Ovary (tissue), 10 donors: ENCODE measurements at regions of chr2 and their contacts with region 1.

Region 1: DNA sequence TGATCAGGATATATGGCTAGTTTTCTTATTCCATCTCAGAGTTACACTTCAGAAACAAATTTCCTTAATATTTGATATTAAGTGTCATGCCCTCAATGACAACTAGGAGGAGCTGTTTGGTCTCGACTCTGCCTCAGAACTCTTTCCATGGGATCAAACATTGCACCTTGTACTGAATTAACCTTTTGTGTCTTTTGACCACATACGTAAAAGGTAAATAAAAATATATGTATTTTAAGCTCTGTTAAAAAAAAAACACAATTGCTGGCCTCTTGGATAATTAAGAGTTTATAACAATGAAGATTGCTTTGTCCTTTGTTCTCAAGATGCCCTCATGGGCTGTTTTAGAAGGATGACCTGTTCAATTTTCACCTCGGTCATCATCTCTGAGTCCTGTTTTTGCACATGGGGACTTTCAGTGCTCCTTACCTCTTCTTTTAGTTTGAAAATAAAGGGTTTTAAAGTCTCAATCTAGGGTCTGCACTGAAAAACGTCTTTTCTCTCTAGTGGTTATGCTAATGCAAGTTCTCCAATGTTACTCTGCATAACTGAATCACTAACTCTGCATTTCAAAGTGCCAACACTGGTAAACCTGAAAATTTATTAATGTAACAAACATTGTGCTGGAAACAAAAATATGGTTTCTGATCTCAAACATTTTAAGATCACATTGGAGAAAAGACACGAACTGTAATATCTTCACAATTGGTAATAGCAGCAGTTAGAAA is 18.8 kb upstream of the FN1 start:
- DNase-seq: no peak
- H3K4me3 ChIP-seq: no peak overlapping the region
- H3K27ac ChIP-seq: no peak overlapping the region
- H3K4me1 ChIP-seq: peaks cover 2% of the 10 kb centered on the region
- H3K27me3 ChIP-seq: no peaks in the 10 kb centered on the region
- CTCF ChIP-seq: peak; percentile 70 to 81 (median 71)
- EP300 ChIP-seq: no peak
- POLR2A ChIP-seq: no peak

Region 2: GRCh38 chr2:214753455-214753854 is 701.2 kb before region 1 on chr2:
- intact Hi-C with region 1: no loop called
- DNase-seq: no peak
- H3K4me3 ChIP-seq: no peak overlapping the region
- H3K27ac ChIP-seq: no peak overlapping the region
- H3K4me1 ChIP-seq: no peaks in the 10 kb centered on the region
- H3K27me3 ChIP-seq: no peaks in the 10 kb centered on the region
- CTCF ChIP-seq: no peak
- EP300 ChIP-seq: no peak
- POLR2A ChIP-seq: no peak

Region 3: DNA sequence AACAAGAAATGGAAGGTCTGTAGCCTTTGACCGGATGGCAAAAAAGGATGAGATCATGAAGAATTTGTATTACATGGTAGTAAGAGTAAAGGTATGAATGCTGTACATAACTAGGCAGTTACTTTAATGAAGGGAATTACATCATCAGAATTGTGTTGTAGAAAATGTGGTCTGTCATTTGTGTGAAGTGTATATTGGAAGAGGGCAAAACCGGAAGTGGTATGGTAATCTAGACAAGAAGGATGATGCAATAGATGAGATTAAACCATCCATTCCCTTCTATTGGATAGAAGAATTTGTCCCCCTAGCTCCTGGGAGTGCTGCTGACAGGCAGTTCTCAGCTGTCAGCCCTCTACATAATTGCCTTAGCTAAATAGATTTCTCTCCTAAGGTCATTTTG is 589.3 kb before region 1 on chr2:
- intact Hi-C with region 1: no loop called
- DNase-seq: no peak
- H3K4me3 ChIP-seq: no peak overlapping the region
- H3K27ac ChIP-seq: no peak overlapping the region
- H3K4me1 ChIP-seq: no peaks in the 10 kb centered on the region
- H3K27me3 ChIP-seq: no peaks in the 10 kb centered on the region
- CTCF ChIP-seq: no peak
- EP300 ChIP-seq: no peak
- POLR2A ChIP-seq: no peak

Region 4: GRCh38 chr2:215391531-215391930 is 63.2 kb before region 1 on chr2:
- intact Hi-C with region 1: no loop called
- DNase-seq: no peak
- H3K4me3 ChIP-seq: no peak overlapping the region
- H3K27ac ChIP-seq: no peak overlapping the region
- H3K4me1 ChIP-seq: no peaks in the 10 kb centered on the region
- H3K27me3 ChIP-seq: no peaks in the 10 kb centered on the region
- CTCF ChIP-seq: no peak
- EP300 ChIP-seq: no peak
- POLR2A ChIP-seq: no peak

Region 5: GRCh38 chr2:215828517-215829184 is 374.0 kb after region 1 on chr2:
- intact Hi-C with region 1: loop called in 1 of 4 experiments (anchors 10 kb)
- DNase-seq: peak; percentile 37 to 65 (median 56)
- H3K4me3 ChIP-seq: no peak overlapping the region
- H3K27ac ChIP-seq: no peak overlapping the region
- H3K4me1 ChIP-seq: peaks cover 6% of the 10 kb centered on the region
- H3K27me3 ChIP-seq: no peaks in the 10 kb centered on the region
- CTCF ChIP-seq: peak; percentile 20 to 56 (median 34)
- EP300 ChIP-seq: no peak
- POLR2A ChIP-seq: no peak

Region 6: DNA sequence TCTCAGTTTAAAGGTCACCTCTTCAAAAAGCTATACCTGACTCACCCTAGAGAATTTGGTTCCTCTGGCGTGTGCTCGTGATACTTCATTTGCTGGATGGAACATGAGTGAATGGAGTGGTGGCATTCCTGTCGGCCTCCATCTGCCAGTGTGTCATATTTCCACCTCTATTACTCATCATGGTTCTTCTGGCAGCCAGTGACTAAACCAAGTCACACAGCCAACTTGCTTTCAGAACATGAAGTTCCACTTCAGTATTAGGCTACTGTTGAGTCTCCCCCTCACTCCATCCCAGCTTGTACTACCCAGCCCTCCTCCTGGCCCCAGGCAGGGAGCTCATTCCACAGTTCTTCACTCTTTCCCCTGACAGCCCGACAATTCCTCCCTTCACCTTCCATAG is 388.9 kb after region 1 on chr2:
- intact Hi-C with region 1: loop called in 1 of 4 experiments (anchors 10 kb)
- DNase-seq: no peak
- H3K4me3 ChIP-seq: no peak overlapping the region
- H3K27ac ChIP-seq: no peak overlapping the region
- H3K4me1 ChIP-seq: peaks cover 2% of the 10 kb centered on the region
- H3K27me3 ChIP-seq: no peaks in the 10 kb centered on the region
- CTCF ChIP-seq: no peak
- EP300 ChIP-seq: no peak
- POLR2A ChIP-seq: no peak

Region 7: DNA sequence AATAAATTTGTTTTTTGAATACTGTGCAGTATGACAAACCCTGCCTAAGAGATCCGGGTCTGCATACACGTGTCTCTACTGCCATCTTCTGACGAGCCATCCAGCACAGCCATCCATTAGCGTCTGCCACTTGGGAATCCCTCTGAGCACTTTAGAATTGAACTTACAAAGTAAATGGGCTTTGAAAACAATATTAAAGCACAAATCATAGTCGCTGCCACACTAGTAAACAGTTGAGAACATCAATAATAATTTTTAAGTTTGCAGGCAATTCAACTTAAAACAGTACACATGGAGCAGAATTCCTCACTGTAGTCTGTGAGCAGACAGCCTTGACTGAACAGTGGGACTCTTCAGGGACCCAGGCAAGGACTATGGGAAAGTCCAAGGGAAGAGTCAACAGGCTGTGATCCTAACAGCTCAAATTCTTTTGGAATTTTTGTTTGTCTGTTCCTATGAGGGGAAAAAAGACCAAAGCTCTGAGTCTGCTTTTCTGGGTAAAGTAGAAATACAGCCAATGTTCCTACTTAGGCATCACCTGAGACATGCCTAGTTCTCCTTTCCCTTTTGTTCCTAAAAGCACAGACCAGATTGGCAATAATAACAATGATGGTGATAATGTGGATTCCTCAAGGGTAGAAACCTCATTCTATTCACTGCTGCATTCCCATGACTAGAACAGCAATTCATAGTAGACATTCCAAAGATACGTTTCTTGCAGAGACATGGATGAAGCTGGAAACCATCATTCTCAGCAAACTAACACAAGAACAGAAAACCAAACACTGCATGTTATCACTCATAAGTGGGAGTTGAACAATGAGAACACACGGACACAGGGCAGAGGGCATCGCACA is 465.8 kb after region 1 on chr2:
- intact Hi-C with region 1: loop called (anchors 5 kb)
- DNase-seq: peak; percentile 55 to 79 (median 71)
- H3K4me3 ChIP-seq: no peak overlapping the region
- H3K27ac ChIP-seq: no peak overlapping the region
- H3K4me1 ChIP-seq: peaks cover 2% of the 10 kb centered on the region
- H3K27me3 ChIP-seq: no peaks in the 10 kb centered on the region
- CTCF ChIP-seq: peak; percentile 62 to 77 (median 63)
- EP300 ChIP-seq: no peak
- POLR2A ChIP-seq: no peak